Naive thymus-derived CD4-positive, alpha-beta T cell (primary cell): ENCODE measurements at regions of chr3 and their contacts with region 1.

Region 1: DNA sequence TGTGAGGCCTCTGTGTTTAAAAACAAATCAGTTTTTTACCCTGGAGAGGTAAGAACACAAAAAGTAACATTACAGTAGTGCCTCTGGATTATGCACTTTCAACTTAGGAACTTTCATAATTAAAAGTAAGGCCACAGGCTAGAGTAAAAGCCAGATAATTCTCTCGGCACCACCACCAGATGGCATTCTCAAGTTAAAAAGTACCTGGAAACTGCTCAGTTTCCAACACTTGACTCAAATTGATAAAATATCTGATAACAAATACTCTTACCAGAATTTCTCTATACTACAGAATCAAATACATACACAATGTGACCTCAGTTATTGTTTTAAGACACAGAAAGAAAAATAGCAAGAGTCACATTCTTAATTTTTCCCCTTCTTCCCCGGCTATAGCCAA is 19.9 kb downstream of the SPICE1 start:
- DNase-seq: peak in 6 of 9 donors; percentile 22 to 62 (median 42)
- ATAC-seq: peak; percentile 67
- H3K4me3 ChIP-seq: no peak overlapping the region
- H3K4me3 Mint-ChIP-seq: no peak overlapping the region
- H3K27ac ChIP-seq: no peak overlapping the region
- H3K27ac Mint-ChIP-seq: no peak overlapping the region
- H3K4me1 ChIP-seq: no peaks in the 10 kb centered on the region
- H3K4me1 Mint-ChIP-seq: peaks cover 0 to 10% (median under 1%) of the 10 kb centered on the region in 7 donors
- H3K27me3 ChIP-seq: no peaks in the 10 kb centered on the region
- H3K27me3 Mint-ChIP-seq: no peaks in the 10 kb centered on the region

Region 2: DNA sequence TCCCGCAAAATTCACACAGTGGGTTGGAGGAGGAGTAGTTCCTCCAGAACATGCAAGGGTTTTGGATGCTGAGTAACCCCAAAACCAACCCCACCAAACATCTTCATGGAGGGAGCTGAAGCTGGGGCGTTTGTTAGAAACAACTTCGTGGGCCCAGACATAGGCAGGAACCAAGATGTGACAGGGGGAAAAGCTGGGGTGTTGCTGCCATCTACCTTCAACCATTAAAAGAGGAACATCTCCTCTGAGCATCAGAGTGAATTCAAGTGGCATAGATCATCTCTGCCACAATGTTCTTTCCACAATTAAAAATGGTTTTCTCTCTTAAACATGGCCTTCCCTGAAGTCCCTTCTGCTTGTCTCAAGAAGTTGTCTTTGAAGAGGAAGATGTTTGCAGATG is 57.8 kb after region 1 on chr3:
- CTCF ChIA-PET with region 1: interaction called, 133 read pairs
- POLR2A ChIA-PET with region 1: interaction called, 4 read pairs
- intact Hi-C with region 1: loop called (anchors 1 kb)
- DNase-seq: peak in 7 of 9 donors; percentile 31 to 58 (median 47)
- ATAC-seq: peak; percentile 81
- H3K4me3 ChIP-seq: no peak overlapping the region
- H3K4me3 Mint-ChIP-seq: no peak overlapping the region
- H3K27ac ChIP-seq: no peak overlapping the region
- H3K27ac Mint-ChIP-seq: peak overlapping the region in 6 of 9 donors; percentile 0 to 79 (median 28)
- H3K4me1 ChIP-seq: no peaks in the 10 kb centered on the region
- H3K4me1 Mint-ChIP-seq: peaks cover 9 to 80% (median 62%) of the 10 kb centered on the region in 7 donors
- H3K27me3 ChIP-seq: no peaks in the 10 kb centered on the region
- H3K27me3 Mint-ChIP-seq: no peaks in the 10 kb centered on the region

Region 3: GRCh38 chr3:113575206-113575605 is 80.2 kb after region 1 on chr3:
- CTCF ChIA-PET with region 1: interaction called, 60 read pairs
- POLR2A ChIA-PET with region 1: interaction called, 5 read pairs
- intact Hi-C with region 1: loop called (anchors 1 kb)
- DNase-seq: no peak
- ATAC-seq: no peak
- H3K4me3 ChIP-seq: no peak overlapping the region
- H3K4me3 Mint-ChIP-seq: no peak overlapping the region
- H3K27ac ChIP-seq: no peak overlapping the region
- H3K27ac Mint-ChIP-seq: peak overlapping the region in 8 of 9 donors; percentile 10 to 79 (median 66)
- H3K4me1 ChIP-seq: no peaks in the 10 kb centered on the region
- H3K4me1 Mint-ChIP-seq: peaks cover 3 to 21% (median 13%) of the 10 kb centered on the region in 7 donors
- H3K27me3 ChIP-seq: no peaks in the 10 kb centered on the region
- H3K27me3 Mint-ChIP-seq: no peaks in the 10 kb centered on the region

Region 4: GRCh38 chr3:113626503-113627371 is 131.7 kb after region 1 on chr3:
- CTCF ChIA-PET with region 1: no interaction called
- POLR2A ChIA-PET with region 1: no interaction called
- intact Hi-C with region 1: loop called (anchors 1 to 2 kb)
- DNase-seq: peak in 2 of 9 donors; percentile 7 to 8
- ATAC-seq: peak; percentile 86
- H3K4me3 ChIP-seq: no peak overlapping the region
- H3K4me3 Mint-ChIP-seq: no peak overlapping the region
- H3K27ac ChIP-seq: no peak overlapping the region
- H3K27ac Mint-ChIP-seq: peak overlapping the region in 8 of 9 donors; percentile 9 to 80 (median 50)
- H3K4me1 ChIP-seq: no peaks in the 10 kb centered on the region
- H3K4me1 Mint-ChIP-seq: peaks cover 0 to 13% (median 4%) of the 10 kb centered on the region in 7 donors
- H3K27me3 ChIP-seq: no peaks in the 10 kb centered on the region
- H3K27me3 Mint-ChIP-seq: no peaks in the 10 kb centered on the region

Region 5: GRCh38 chr3:113912552-113913236 is 417.7 kb after region 1 on chr3:
- CTCF ChIA-PET with region 1: interaction called, 4 read pairs
- POLR2A ChIA-PET with region 1: no interaction called
- intact Hi-C with region 1: loop called (anchors 1 to 2 kb)
- DNase-seq: peak in 7 of 9 donors; percentile 18 to 50 (median 36)
- ATAC-seq: peak; percentile 91
- H3K4me3 ChIP-seq: no peak overlapping the region
- H3K4me3 Mint-ChIP-seq: peak overlapping the region in 8 of 10 donors; percentile 29 to 75 (median 64)
- H3K27ac ChIP-seq: no peak overlapping the region
- H3K27ac Mint-ChIP-seq: peak overlapping the region in 6 of 9 donors; percentile 5 to 76 (median 58)
- H3K4me1 ChIP-seq: no peaks in the 10 kb centered on the region
- H3K4me1 Mint-ChIP-seq: peaks cover 0 to 7% (median 5%) of the 10 kb centered on the region in 7 donors
- H3K27me3 ChIP-seq: no peaks in the 10 kb centered on the region
- H3K27me3 Mint-ChIP-seq: peaks cover 0 to 15% (median 0%) of the 10 kb centered on the region in 5 donors